ENCODE measurements at regions of chr10 and their contacts with region 1.

Region 1: GRCh38 chr10:47311932-47312662 is 10.2 kb upstream of the GDF2 start:
- ATAC-seq: peak; percentile 73 to 97 (median 93)
- H3K4me3 ChIP-seq: no peak overlapping the region
- H3K27ac ChIP-seq: no peak overlapping the region
- H3K4me1 ChIP-seq: no peaks in the 10 kb centered on the region

Region 2: DNA sequence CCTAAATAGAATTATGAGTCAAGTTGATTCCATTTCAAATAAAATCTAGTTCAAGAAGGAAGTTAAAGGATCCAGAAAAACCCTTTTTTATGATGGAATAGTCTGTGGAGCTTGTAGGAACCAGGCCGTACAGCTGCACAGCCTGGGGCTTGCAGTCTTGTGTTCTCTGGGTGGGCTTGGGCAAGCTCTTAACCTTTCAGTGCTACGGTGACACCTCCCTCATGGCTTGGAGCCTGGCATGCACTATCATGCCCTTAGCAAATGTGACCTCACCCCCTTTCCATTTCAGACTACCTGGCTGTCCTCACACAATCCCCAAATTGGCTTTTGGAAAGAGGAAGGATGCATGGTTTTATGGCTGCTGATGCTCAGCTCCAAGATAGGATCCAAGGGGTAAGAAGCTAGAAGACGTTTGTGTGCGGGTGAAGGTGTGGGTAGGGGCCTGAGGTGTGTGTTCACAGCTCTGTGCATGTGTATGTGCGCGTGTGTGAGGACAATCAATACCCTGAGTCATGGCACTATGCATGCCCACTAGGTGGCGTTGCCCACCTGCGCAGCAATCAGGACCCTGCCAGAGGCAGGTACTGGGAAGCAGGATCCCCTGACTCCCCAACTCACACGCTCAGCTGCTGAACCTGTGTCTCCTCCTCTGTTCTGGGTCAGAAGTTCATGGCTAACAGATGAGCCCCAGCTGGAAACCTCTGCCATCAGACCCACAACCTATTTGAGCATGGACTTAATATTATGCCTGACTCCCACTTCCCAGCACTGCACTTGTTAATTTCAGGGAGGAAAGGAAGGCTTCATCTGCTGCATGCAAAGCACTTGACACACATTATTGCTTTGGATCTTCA is 287.5 kb before region 1 on chr10:
- in situ Hi-C with region 1: loop called in 3 of 9 experiments (anchors 10 to 25 kb)
- ATAC-seq: peak; percentile 76 to 98 (median 94)
- H3K4me3 ChIP-seq: no peak overlapping the region
- H3K27ac ChIP-seq: no peak overlapping the region
- H3K4me1 ChIP-seq: peaks cover 0 to 5% of the 10 kb centered on the region in 2 donors

Region 3: DNA sequence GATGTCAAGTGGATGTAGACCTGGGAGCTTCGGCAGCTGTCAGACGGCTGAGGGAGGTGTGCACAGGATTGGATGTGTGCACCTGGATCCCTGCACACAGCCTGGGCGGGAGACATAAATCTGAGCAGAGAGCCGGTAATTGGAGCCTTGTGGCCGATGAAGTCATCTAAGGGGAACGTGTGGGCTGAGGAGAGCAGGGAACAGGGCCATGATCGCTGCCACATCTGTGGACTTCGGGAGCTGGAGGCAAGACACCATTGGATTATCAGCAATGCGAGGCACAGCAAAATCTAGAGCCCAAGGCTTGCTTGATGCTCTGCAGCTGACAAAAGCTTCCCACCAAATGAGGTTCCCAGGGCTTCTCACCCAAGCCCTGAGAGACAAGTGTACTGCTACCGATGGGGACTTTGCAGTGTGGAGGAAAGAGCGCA is 253.1 kb before region 1 on chr10:
- in situ Hi-C with region 1: loop called in 1 of 9 experiments (anchors 10 kb)
- ATAC-seq: peak in 4 of 8 experiments; percentile 48 to 76 (median 70)
- H3K4me3 ChIP-seq: no peak overlapping the region
- H3K27ac ChIP-seq: no peak overlapping the region
- H3K4me1 ChIP-seq: no peaks in the 10 kb centered on the region

Region 4: DNA sequence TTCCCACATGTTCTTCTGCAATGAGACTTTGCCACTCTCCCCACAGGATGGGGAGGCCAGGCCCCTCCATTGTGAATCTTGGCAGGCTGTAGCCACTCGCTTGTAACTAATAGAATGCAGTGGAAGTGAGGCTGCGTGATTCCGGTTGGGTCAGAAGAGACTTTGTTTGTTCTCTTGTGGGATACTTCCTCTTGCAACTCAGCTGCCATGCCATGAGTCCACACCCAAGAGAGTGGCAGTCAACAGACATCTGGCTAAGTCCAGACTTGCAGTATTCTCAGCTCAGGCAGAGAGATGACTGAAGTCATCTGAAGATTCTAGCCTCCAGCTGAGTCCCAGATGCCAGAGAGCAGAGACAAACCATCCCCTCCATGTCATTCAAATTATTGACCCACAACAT is 165.5 kb before region 1 on chr10:
- in situ Hi-C with region 1: no loop called
- ATAC-seq: peak in 2 of 8 experiments; percentile 79 to 96
- H3K4me3 ChIP-seq: no peak overlapping the region
- H3K27ac ChIP-seq: no peak overlapping the region
- H3K4me1 ChIP-seq: no peaks in the 10 kb centered on the region

Region 5: DNA sequence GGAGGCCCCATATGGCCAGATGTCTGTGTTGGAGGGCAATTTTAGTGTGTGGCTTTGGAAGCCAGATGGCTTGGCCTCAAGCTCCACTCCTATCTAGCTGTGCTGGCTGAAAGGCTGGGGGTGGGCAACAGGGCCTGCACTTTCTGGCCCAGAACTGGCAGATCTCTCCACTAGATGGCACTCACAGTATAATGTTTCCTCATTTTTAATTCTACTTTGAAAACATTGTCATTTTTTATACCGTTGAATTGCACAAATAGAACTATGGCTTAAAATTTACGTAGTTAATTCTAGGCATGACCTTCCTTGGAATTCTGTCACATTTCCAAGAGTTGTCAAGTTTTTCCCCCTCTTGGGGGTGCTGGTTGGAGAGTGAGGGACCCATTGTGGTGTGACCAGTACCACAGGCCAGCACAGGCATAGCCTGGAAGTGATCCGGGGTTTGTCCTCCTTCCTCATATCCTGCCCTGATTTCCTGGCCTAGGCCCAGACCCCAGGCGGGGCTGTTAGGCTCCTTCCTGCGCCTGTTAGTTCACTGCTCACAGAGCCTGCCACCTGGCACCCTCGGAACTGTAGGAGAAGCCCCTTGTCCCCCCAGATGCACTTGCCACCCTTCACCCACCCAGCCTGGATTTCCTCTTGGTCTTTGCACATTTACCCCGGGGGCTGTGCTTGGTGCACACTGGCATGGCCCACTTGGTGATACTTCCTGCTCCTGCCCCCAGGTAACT is 1239.9 kb after region 1 on chr10:
- in situ Hi-C with region 1: no loop called
- ATAC-seq: peak; percentile 29 to 90 (median 62)
- H3K4me3 ChIP-seq: no peak overlapping the region
- H3K27ac ChIP-seq: no peak overlapping the region
- H3K4me1 ChIP-seq: no peaks in the 10 kb centered on the region

Measured in motor neuron (in vitro differentiated cells).